ENCODE measurements at regions of chr17 and their contacts with region 1.

Region 1: DNA sequence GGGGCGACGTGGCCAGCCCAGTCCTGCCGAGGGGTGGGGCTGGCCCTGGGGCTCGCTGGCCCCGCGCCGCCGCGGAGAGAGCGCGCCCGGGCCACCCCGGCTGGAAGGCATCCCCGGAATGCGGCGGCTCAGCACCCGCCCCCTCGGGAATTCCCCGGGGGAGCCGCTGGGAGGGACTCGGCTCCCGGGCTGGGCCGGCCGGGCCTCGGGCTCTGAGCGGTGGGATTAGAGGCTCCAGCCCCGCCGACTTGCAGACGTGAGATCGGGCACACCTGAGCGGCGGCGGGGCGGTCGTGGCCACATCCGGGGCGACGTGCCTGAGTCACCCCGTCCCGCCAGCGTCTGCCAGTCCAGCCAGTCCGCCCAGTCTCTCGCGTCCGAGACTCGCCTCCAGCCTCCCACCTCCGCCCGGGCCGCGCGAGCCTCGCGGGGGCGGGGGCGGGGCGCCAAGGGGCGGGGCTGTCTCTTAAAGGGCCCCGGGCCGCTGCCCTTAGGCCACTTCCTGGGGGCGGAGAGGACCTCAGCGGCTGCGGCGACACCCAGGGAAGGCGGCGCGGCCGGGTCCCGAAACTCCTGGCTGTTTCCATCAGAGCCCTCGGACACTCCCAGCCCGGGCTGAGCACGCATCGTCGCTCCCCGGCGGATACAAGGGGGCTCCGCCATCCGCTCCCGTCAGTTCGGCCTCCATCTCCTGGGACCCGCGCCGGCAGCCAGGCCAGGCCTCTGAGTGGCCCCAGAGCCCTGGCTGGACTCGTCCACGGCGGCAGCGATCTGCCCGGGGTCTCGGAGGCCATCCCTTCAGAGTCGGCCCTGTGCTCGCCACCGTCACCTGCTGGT is at the start of gene KCTD11:
- DNase-seq: peak; percentile 88
- ATAC-seq: peak; percentile 73
- H3K4me3 ChIP-seq: peak within 1 kb of the TSS; percentile 93
- H3K27ac ChIP-seq: peak within 1 kb of the TSS; percentile 99
- H3K4me1 ChIP-seq: peaks cover 39% of the 10 kb centered on the region
- H3K27me3 ChIP-seq: no peaks in the 10 kb centered on the region
- CTCF ChIP-seq: 0 out of 2 replicates have a peak, but pooled peaks have one; percentile 0
- POLR2A ChIP-seq: peak; percentile 66; the same call in 1 of the 2 replicates
- RAD21 ChIP-seq: no peak; the same call in 1 of the 2 replicates
- total RNA-seq, gene KCTD11: 10.6 and 10.8 TPM in 2 replicates

Region 2: GRCh38 chr17:7107012-7107754 is 244.7 kb before region 1 on chr17:
- CTCF ChIA-PET with region 1: no interaction called
- POLR2A ChIA-PET with region 1: no interaction called
- dilution Hi-C with region 1: no loop called
- in situ Hi-C with region 1: no loop called
- intact Hi-C with region 1: no loop called
- DNase-seq: no peak
- ATAC-seq: no peak
- H3K4me3 ChIP-seq: no peak overlapping the region
- H3K27ac ChIP-seq: no peak overlapping the region
- H3K4me1 ChIP-seq: no peaks in the 10 kb centered on the region
- H3K27me3 ChIP-seq: peaks cover 24% of the 10 kb centered on the region
- CTCF ChIP-seq: no peak
- POLR2A ChIP-seq: no peak
- RAD21 ChIP-seq: no peak

Region 3: DNA sequence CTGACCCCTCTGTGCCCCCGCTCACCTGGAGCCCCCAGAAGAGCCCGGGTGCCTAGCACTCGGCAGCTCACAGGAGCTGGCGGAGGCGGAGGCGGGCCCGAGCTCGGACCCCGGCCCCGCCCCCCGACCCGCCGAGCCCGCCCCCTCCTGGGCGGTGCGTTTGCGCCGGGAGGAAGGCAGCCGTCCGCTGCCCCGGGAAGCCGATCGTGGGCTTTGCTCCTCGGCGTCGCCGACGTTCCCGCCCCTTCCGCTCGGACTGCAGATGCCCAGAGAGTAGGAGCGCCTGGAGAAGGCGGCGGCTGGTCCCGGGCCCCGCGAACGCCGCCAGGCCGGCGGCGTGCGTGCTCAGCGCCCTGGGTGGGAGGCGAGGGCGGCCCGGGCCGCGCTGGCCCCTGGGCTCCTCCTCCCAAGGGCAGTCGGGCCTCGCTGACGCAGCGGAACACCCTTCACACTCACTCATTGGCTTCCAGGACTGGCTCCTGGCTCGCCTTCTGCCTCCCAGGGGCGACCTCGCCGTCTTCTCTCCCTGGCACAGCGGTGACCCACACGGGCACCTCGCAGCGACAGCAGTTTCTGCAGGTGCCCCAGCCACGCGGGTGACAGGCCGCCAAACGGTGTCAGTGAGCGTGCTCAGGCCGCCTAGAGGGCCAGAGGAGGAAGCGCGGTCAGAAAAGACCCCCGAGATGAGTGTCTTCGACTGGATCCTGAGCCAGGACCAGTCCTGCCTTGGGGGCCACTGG is 42.7 kb after region 1 on chr17 and contains the start of gene PLSCR3:
- CTCF ChIA-PET with region 1: interaction called, 5 read pairs
- POLR2A ChIA-PET with region 1: no interaction called
- dilution Hi-C with region 1: no loop called
- in situ Hi-C with region 1: loop called (anchors 5 kb)
- intact Hi-C with region 1: no loop called
- DNase-seq: peak; percentile 84
- ATAC-seq: peak; percentile 95
- H3K4me3 ChIP-seq: peak within 1 kb of the TSS; percentile 70
- H3K27ac ChIP-seq: peak within 1 kb of the TSS; percentile 92
- H3K4me1 ChIP-seq: peaks cover 8% of the 10 kb centered on the region
- H3K27me3 ChIP-seq: no peaks in the 10 kb centered on the region
- CTCF ChIP-seq: peak; percentile 22; the same call in 1 of the 2 replicates
- POLR2A ChIP-seq: peak; percentile 73; the same call in 1 of the 2 replicates
- RAD21 ChIP-seq: no peak
- total RNA-seq, gene PLSCR3: 6.1 and 6.4 TPM in 2 replicates

Region 4: GRCh38 chr17:7403977-7404736 is 52.3 kb after region 1 on chr17 and contains the start of gene TMEM256:
- CTCF ChIA-PET with region 1: interaction called, 5 read pairs
- POLR2A ChIA-PET with region 1: no interaction called
- dilution Hi-C with region 1: no loop called
- in situ Hi-C with region 1: no loop called
- intact Hi-C with region 1: loop called (anchors 2 kb)
- DNase-seq: peak; percentile 99
- ATAC-seq: peak; percentile 80
- H3K4me3 ChIP-seq: peak within 1 kb of the TSS; percentile 94
- H3K27ac ChIP-seq: peak within 1 kb of the TSS; percentile 75
- H3K4me1 ChIP-seq: peaks cover 9% of the 10 kb centered on the region
- H3K27me3 ChIP-seq: no peaks in the 10 kb centered on the region
- CTCF ChIP-seq: no peak
- POLR2A ChIP-seq: peak; percentile 57; the same call in 1 of the 2 replicates
- RAD21 ChIP-seq: no peak
- total RNA-seq, gene TMEM256: 35.3 and 38.4 TPM in 2 replicates

Region 5: DNA sequence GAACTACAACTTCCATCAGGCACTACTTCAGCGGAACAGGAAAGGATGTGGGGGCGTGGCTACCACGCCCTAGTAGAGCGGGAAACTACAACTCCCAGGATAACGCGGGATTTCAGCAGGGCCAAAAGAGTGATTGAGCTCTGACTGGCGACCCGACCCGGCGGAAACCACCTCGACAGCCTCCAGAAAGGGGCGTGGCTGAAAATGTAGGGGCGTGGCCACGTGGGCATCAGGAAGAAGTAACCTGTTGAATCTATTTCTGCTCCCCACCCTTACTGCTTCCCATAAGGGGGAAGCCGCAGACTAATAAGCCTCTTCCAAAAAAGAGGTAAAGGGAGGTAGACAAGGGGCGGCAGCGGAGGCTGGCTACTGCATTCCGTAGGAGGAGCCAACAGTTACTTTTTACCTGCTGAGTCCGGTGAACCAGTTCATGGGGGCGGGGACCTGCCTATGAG is 83.4 kb after region 1 on chr17 and contains the start of gene TMEM102:
- CTCF ChIA-PET with region 1: no interaction called
- POLR2A ChIA-PET with region 1: no interaction called
- dilution Hi-C with region 1: no loop called
- in situ Hi-C with region 1: no loop called
- intact Hi-C with region 1: loop called (anchors 5 kb)
- DNase-seq: peak; percentile 94
- ATAC-seq: peak; percentile 77
- H3K4me3 ChIP-seq: peak within 1 kb of the TSS; percentile 33
- H3K27ac ChIP-seq: no peak within 1 kb of the TSS
- H3K4me1 ChIP-seq: peaks cover 2% of the 10 kb centered on the region
- H3K27me3 ChIP-seq: peaks cover 25% of the 10 kb centered on the region
- CTCF ChIP-seq: no peak
- POLR2A ChIP-seq: no peak
- RAD21 ChIP-seq: no peak
- total RNA-seq, gene TMEM102: 1.1 and 1.4 TPM in 2 replicates

Region 6: DNA sequence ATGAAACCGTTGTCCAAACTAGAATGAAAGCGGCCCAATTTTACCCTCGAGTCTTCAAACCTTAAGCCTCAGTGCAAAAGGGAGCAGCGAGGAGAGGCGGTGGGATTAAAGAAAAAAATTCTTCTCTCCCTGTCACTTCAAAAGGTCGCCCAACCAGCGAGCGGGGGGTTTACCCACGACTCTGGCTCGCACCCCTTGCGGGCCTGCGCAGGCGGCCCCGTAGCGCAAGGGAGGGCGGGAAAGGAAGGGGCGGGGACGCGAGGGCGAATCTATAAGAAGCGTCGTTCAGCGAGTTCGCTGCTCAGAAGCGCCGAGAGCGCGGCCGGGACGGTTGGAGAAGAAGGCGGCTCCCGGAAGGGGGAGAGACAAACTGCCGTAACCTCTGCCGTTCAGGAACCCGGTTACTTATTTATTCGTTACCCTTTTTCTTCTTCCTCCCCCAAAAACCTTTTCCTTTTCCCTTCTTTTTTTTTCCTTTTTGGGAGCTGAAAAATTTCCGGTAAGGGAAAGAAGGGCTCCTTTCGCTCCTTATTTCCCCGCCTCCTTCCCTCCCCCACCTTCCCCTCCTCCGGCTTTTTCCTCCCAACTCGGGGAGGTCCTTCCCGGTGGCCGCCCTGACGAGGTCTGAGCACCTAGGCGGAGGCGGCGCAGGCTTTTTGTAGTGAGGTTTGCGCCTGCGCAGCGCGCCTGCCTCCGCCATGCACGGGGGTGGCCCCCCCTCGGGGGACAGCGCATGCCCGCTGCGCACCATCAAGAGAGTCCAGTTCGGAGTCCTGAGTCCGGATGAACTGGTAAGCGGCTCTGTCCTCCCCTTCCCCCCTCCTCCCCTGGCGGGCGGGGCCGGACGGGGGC is 132.4 kb after region 1 on chr17 and contains the start of gene POLR2A:
- CTCF ChIA-PET with region 1: no interaction called
- POLR2A ChIA-PET with region 1: interaction called, 3 read pairs
- dilution Hi-C with region 1: no loop called
- in situ Hi-C with region 1: no loop called
- intact Hi-C with region 1: loop called (anchors 2 kb)
- DNase-seq: peak; percentile 98
- ATAC-seq: peak; percentile 72
- H3K4me3 ChIP-seq: peak within 1 kb of the TSS; percentile 73
- H3K27ac ChIP-seq: peak within 1 kb of the TSS; percentile 99
- H3K4me1 ChIP-seq: peaks cover 14% of the 10 kb centered on the region
- H3K27me3 ChIP-seq: no peaks in the 10 kb centered on the region
- CTCF ChIP-seq: no peak
- POLR2A ChIP-seq: peak; percentile 100
- RAD21 ChIP-seq: no peak; the same call in 1 of the 2 replicates
- total RNA-seq, gene POLR2A: 56.4 and 56.6 TPM in 2 replicates

Region 7: DNA sequence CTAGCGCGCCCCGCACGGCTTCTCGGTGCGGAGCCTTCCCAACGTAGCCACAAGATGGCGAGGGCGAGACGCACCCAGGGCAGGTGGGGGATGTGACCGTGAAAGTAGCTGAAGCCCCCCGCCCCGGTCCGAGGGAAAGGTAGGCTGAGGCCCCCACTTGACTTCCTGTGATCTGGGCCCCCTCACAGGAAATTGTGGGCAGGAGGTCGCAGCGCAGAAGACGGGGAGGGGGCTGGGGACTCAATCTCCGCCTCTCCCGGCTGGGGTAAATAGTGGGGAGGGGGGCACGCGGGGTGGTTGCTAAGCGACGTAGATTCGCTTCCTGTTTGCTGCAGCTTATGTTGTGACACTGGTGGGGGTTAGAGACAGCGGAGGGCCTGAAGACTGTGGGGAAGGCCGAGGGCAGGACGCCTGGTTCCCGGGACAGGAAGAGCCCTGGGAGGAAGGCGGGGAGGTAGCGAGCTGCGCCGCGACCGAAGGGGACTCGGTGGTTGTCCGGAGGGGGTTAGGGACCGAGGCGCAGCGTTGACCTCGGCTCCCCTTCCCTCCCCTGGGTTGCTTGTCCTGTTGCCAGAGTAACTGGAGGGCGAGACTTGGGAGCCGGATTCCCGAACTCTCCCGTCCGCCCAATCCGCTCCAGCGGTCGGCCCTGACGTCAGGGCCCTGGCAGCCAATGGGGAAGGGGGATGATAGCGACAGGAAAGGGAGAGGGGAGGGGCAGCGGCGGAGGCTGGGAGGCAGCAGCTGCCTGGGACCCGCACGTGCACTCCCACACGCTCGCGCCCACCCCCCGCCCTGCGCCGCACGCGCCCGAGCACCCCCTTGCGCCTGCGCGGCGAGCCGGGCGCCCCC is 483.3 kb after region 1 on chr17:
- CTCF ChIA-PET with region 1: no interaction called
- POLR2A ChIA-PET with region 1: no interaction called
- dilution Hi-C with region 1: no loop called
- in situ Hi-C with region 1: no loop called
- intact Hi-C with region 1: loop called (anchors 5 kb)
- DNase-seq: peak; percentile 99
- ATAC-seq: peak; percentile 63
- H3K4me3 ChIP-seq: peak overlapping the region; percentile 64
- H3K27ac ChIP-seq: peak overlapping the region; percentile 89
- H3K4me1 ChIP-seq: peaks cover 15% of the 10 kb centered on the region
- H3K27me3 ChIP-seq: peaks cover 4% of the 10 kb centered on the region
- CTCF ChIP-seq: peak; percentile 79
- POLR2A ChIP-seq: peak; percentile 79
- RAD21 ChIP-seq: peak; percentile 76

Measured in IMR-90 (cell line).